ENCODE measurements at regions of chr1 and their contacts with region 1.

Region 1: DNA sequence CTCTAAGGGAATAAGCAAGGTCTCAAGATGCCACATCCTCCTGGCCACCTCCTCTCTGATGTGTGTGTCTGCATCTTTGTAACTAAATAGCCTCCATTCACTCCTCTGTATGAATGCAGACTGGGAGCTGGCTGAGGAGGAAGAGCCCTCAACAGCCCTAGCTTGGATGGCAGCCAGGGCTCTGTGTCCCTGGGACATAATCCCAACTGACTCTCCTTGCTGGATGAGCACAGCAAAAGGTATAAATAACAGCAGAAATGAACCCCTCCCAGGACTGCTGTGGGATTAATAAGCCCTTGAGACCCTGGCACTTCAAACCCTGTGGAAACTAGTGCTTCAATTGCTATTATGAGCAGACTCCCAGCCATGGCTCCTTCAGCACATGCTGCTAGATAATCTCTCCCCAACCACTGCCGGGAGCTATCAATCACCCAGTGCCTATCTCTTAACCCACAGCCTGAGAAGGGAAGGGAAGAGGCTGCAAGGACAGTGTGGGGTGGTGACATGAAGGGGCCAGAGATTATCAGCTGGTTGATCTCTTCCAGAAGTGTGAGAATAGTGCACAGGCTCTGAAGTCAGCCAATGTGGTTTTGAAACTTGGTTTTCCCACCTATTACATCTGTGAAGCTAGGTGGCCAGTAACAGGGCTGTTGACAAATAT is 152.2 kb downstream of the TNR start:
- DNase-seq: no peak

Region 2: GRCh38 chr1:175826705-175827104 is 235.5 kb after region 1 on chr1:
- intact Hi-C with region 1: no loop called
- DNase-seq: no peak

Region 3: GRCh38 chr1:176789571-176790090 is 1198.4 kb after region 1 on chr1:
- intact Hi-C with region 1: loop called in 1 of 2 experiments (anchors 5 kb)
- DNase-seq: no peak